ENCODE measurements at regions of chr12 and their contacts with region 1.

Region 1: DNA sequence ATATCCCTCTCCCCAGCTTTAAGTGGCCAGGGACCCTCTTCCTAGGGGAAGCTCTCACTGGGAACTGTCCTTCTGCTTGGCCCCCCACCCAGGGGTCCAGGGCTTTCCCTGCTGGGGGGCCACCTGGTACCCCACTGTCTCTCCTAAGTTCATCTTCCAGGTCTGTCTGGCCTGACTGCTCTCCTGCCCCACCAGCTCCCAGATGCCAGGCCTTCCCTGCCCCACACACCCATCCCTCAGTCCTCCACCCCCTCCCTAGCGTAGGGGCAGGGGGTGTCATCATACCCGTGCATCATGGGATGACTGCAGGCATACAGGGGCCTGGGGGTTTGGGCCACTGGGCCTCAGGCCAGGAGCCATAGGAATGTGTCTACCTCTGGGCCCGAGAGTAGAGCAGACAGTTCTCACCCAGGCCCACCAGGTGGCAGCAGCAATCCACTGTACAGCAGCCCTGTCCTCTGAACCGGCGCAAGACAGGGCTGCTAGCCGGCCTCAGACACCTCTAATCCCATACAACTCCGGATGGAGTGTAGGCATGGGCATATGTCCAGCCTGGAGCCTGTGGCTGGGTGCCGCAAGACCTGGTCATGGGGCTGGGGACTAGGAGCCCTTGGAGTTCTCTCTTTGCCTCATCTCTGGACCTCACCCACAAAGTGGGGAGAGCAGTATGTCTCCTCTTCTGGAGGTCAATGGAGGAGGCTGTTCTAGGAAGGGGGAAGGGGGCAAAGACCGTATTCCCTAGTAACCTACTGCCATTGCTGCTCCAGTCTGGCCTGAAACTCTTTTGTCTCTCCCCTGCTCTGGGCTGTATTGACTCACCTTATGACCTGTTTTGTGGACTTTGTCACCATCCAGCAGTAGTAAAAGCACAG is 10.0 kb upstream of the SMARCD1 start:
- DNase-seq: peak; percentile 89
- ATAC-seq: peak; percentile 95

Region 2: GRCh38 chr12:49557917-49558215 is 517.3 kb before region 1 on chr12:
- intact Hi-C with region 1: no loop called
- DNase-seq: no peak
- ATAC-seq: peak; percentile 29

Region 3: GRCh38 chr12:49866859-49867579 is 208.2 kb before region 1 on chr12:
- intact Hi-C with region 1: loop called (anchors 5 kb)
- DNase-seq: peak; percentile 87
- ATAC-seq: peak; percentile 45

Region 4: GRCh38 chr12:49967042-49967776 is 108.0 kb before region 1 on chr12:
- intact Hi-C with region 1: loop called (anchors 5 kb)
- DNase-seq: peak; percentile 95
- ATAC-seq: peak; percentile 87

Region 5: DNA sequence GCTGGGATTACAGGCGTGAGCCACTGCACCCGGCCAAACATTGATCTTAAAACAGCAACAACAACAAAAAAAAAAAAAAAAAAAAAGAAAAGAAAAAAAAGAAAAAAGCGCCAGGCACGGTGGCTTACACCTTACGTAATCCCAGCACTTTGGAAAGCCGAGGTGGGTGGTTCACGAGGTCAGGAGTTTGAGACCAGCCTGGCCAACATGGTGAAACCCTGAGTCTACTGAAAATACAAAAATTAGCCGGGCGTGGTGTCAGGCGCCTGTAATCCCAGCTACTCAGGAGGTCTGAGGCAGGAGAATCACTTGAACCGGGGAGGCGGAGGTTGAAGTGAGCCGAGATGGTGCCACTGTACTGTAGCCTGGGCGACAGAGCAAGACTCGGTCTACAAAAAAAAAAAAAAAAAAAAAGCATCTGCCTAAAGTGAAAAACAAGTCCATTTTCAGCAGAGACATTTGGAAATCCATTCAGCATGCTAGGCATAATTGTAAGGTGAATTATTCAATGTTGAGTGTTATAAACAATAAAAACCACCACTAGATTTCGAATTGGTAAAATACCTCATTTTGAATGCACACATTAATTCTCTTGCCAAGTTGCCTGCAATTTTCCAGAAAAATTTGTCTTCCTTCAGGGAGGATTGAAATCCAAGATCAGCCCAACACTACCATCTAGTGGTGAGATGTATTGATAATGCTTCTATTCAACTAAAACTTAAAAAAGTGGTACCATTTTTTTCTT is 100.0 kb after region 1 on chr12:
- intact Hi-C with region 1: loop called (anchors 5 kb)
- DNase-seq: no peak
- ATAC-seq: peak; percentile 61